RWPE1 (cell line): ENCODE measurements at regions of chr5 and their contacts with region 1.

Region 1: GRCh38 chr5:168987543-168988300 is 313.2 kb downstream of the SLIT3 start:
- DNase-seq: peak; percentile 76
- H3K27ac ChIP-seq: no peak overlapping the region
- CTCF ChIP-seq: peak; percentile 96

Region 2: GRCh38 chr5:168268949-168269943 is 718.5 kb before region 1 on chr5:
- CTCF ChIA-PET with region 1: no interaction called
- POLR2A ChIA-PET with region 1: no interaction called
- DNase-seq: peak; percentile 92
- H3K27ac ChIP-seq: peak overlapping the region; percentile 61
- CTCF ChIP-seq: peak; percentile 95

Region 3: DNA sequence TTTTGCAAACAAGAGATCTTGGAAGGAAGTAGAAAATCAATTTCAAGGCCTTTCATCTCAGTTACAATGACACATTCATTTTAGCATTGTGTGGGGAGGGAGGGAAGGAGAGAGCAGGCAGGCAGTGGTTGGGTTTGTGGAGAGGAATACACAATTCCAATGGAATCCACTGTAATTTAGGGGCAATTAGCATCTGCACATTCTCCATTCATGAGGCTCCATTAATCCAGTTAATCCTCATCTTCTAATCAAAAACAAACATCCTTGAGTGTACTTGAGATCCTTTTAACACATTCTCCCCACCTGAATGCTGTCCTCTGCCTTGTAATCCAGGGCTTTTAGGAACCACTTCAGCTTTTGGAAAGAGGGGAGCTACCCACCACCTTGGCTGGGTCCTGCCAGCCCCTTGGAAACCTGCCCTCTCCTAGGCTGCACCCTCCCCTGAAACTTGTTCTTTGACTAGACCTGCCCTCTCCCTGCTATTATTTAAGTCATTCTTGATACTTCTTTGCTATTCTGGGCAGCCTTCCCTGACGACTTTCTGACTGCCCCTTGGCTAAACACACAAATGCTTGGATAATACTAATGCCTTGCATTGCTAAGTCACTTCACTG is 42.0 kb after region 1 on chr5:
- CTCF ChIA-PET with region 1: no interaction called
- POLR2A ChIA-PET with region 1: no interaction called
- DNase-seq: no peak
- H3K27ac ChIP-seq: no peak overlapping the region
- CTCF ChIP-seq: no peak

Region 4: DNA sequence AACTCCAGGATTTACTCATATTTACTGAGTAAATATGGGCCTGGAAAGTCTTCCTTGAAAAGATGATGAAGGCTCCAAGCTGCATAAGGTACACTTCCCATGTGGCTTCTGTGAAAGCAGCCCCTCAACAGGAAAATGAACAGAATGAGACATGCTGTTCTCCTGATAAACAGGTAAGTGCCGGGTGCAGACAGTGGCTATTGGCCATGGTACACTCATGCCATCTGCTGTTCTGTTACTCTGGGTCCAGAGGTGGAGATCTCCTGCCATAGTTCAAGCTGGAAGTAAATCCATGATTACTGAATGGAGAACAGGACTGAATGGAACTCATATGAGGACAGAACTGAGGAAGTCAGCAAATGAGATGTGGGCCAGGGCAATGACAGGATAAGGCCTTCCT is 209.6 kb after region 1 on chr5:
- CTCF ChIA-PET with region 1: interaction called, 28 read pairs
- POLR2A ChIA-PET with region 1: no interaction called
- DNase-seq: peak; percentile 63
- H3K27ac ChIP-seq: no peak overlapping the region
- CTCF ChIP-seq: no peak

Region 5: DNA sequence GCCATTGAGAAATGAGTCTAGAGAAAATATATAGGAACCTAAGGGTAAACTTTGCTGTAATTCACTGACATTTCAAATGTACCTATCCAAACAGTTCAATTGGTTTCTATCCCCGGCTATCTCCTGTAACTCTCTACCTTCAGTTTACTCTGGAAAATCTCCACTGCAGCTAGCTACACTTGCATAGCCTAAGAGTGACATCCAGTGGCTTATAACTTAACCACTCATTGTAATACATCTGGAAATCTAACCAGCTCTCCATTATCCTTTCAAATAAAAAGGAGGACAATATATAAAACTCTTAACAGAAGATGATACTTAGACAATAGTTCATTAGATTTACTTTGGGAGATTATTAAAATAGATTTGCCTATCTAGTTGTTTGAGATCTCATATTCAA is 560.6 kb after region 1 on chr5:
- CTCF ChIA-PET with region 1: interaction called, 15 read pairs
- POLR2A ChIA-PET with region 1: no interaction called
- DNase-seq: peak; percentile 60
- H3K27ac ChIP-seq: no peak overlapping the region
- CTCF ChIP-seq: peak; percentile 52